ENCODE measurements at regions of chr15 and their contacts with region 1.

Region 1: GRCh38 chr15:66386204-66387123 is at the start of gene MAP2K1:
- DNase-seq: peak; percentile 92
- ATAC-seq: peak; percentile 92
- H3K4me3 ChIP-seq: peak within 1 kb of the TSS; percentile 86 to 94 (median 93)
- H3K27ac ChIP-seq: peak within 1 kb of the TSS; percentile 67
- H3K4me1 ChIP-seq: peaks cover 50% of the 10 kb centered on the region
- H3K27me3 ChIP-seq: no peaks in the 10 kb centered on the region; a peak in 1 of 5 replicates
- CTCF ChIP-seq: peak; percentile 98
- EP300 ChIP-seq: no peak
- POLR2A ChIP-seq: peak; percentile 67 to 86
- RAD21 ChIP-seq: peak; percentile 51; the same call in 1 of the 2 replicates
- total RNA-seq, gene MAP2K1: 24.1 and 29.5 TPM in 2 replicates

Region 2: GRCh38 chr15:66293419-66294156 is 92.9 kb before region 1 on chr15 and contains the start of gene DIS3L:
- CTCF ChIA-PET with region 1: no interaction called
- POLR2A ChIA-PET with region 1: interaction called, 3 read pairs
- in situ Hi-C with region 1: no loop called
- intact Hi-C with region 1: loop called (anchors 10 kb)
- DNase-seq: peak; percentile 32
- ATAC-seq: peak; percentile 87
- H3K4me3 ChIP-seq: peak within 1 kb of the TSS; percentile 69 to 86 (median 82)
- H3K27ac ChIP-seq: peak within 1 kb of the TSS; percentile 91
- H3K4me1 ChIP-seq: peaks cover 41% of the 10 kb centered on the region
- H3K27me3 ChIP-seq: no peaks in the 10 kb centered on the region; a peak in 1 of 5 replicates
- CTCF ChIP-seq: no peak
- EP300 ChIP-seq: no peak
- POLR2A ChIP-seq: peak; percentile 54 to 85
- RAD21 ChIP-seq: peak; percentile 25; the same call in 1 of the 2 replicates
- total RNA-seq, gene DIS3L: 50.5 and 65.4 TPM in 2 replicates

Region 3: DNA sequence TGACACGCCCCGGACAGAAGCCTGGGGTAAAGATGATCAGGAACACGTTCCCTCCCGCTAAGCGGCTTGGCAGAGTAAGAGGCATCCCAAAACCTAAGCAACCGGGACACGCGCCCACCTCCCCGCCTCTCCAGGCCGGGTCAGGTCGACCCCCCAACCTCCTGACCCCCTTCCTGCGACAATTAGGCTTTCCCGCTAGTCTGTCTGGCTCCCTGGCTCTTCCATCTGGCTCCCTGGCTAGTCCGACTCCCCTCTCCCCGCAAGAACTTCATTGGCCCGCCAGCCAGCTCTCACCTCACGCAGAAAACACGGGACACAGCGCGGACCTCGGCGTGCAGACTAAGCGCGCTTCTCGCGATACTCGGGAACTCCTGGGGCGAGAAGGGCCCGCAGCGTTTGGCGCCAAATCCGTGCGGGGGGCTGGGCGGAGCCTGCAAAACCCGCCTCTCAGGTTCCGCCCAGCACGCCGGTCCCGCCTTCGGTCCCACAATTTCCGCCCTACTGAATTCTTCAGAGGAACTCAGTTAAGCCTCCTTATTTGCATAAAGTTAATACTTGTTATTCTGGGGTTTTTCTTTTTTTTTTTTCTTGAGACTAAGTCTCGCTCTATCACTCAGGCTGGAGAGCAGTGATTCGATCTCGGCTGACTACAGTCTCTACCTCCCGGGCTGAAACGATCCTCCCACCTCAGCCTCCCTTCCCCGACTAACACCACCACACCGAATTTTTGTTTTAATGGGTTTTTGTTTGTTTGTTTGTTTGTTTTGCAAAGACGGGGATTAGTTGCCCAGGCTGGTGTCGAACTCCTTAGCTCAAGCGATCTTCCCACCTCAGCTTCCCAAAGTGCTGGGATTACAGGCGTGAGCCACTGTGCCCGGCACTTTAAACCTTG is 29.9 kb before region 1 on chr15 and contains the start of gene TIPIN:
- CTCF ChIA-PET with region 1: no interaction called
- POLR2A ChIA-PET with region 1: interaction called, 11 read pairs
- in situ Hi-C with region 1: no loop called
- intact Hi-C with region 1: loop called (anchors 2 kb)
- DNase-seq: peak; percentile 90
- ATAC-seq: peak; percentile 97
- H3K4me3 ChIP-seq: peak within 1 kb of the TSS; percentile 90 to 91 (median 90)
- H3K27ac ChIP-seq: peak within 1 kb of the TSS; percentile 81
- H3K4me1 ChIP-seq: peaks cover 39% of the 10 kb centered on the region
- H3K27me3 ChIP-seq: no peaks in the 10 kb centered on the region; a peak in 2 of 5 replicates
- CTCF ChIP-seq: no peak
- EP300 ChIP-seq: no peak
- POLR2A ChIP-seq: peak; percentile 84 to 91
- RAD21 ChIP-seq: no peak
- total RNA-seq, gene TIPIN: 28.6 and 37.9 TPM in 2 replicates

Region 4: DNA sequence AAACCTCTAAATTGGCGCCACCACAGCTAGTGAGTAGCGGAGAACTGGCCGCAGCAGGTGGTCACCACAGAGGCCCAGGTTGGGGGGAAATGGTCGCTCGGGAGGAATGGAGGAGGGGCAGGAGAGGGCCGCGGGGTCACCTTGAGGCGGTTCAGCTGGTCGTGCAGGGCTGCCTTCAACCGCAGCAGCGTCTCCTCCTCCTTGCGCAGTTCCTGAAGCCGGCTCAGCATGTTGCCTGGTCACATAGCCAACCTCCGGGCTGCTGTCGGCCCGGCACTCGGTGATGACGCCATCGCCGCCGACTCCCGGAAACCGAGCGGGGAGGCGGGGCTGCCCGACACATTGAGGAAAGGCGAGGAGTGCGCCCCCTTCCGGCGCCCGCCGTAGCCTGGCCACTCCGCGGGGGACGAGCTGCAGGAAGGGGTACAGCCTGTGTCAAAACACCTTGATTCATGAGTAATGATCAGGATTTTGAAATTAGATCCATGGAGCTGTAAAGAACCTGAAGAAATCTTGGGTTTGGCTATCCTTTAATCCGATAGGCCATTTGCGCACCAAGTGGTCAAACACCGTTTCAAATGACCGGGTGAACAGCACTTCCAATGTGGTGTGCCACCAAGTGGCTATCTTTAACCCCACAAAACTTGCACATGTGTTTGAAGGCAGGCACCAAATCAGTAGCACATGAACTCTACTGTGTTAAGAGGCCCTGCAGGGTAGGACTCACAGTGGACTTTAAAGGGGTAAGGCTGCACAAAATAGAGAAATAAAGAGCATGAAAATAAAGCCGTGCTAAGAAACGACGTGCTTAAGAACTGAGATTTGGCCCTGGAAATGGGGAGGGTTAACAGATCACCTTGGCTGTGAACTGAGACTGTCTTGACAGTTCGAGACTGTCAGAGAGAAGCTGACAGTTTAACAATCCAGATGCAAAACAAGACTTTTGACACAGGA is 111.3 kb after region 1 on chr15 and contains the start of gene SNAPC5:
- CTCF ChIA-PET with region 1: interaction called, 17 read pairs
- POLR2A ChIA-PET with region 1: interaction called, 38 read pairs
- in situ Hi-C with region 1: loop called (anchors 25 kb)
- intact Hi-C with region 1: loop called (anchors 1 kb)
- DNase-seq: peak; percentile 88
- ATAC-seq: peak; percentile 80
- H3K4me3 ChIP-seq: peak within 1 kb of the TSS; percentile 80 to 93 (median 86)
- H3K27ac ChIP-seq: peak within 1 kb of the TSS; percentile 80
- H3K4me1 ChIP-seq: peaks cover 56% of the 10 kb centered on the region
- H3K27me3 ChIP-seq: no peaks in the 10 kb centered on the region
- CTCF ChIP-seq: peak; percentile 97
- EP300 ChIP-seq: no peak
- POLR2A ChIP-seq: peak; percentile 71 to 81
- RAD21 ChIP-seq: peak; percentile 78
- total RNA-seq, gene SNAPC5: 36.2 and 49.3 TPM in 2 replicates

Region 5: GRCh38 chr15:66504563-66505429 is 118.3 kb after region 1 on chr15 and contains the starts of genes RPL4 and ZWILCH:
- CTCF ChIA-PET with region 1: no interaction called
- POLR2A ChIA-PET with region 1: interaction called, 13 read pairs
- in situ Hi-C with region 1: loop called (anchors 25 kb)
- intact Hi-C with region 1: no loop called
- DNase-seq: peak; percentile 97
- ATAC-seq: peak; percentile 90
- H3K4me3 ChIP-seq: peak within 1 kb of the TSS; percentile 69 to 100 (median 88)
- H3K27ac ChIP-seq: peak within 1 kb of the TSS; percentile 89
- H3K4me1 ChIP-seq: peaks cover 50% of the 10 kb centered on the region
- H3K27me3 ChIP-seq: peaks cover 0 to 5% of the 10 kb centered on the region in 2 experiments; a peak in 1 of 5 replicates
- CTCF ChIP-seq: no peak
- EP300 ChIP-seq: peak in 1 of 2 experiments; percentile 14; a peak in 1 of 4 replicates
- POLR2A ChIP-seq: peak; percentile 94 to 96
- RAD21 ChIP-seq: no peak
- total RNA-seq, gene RPL4: 3,630 and 4,972 TPM in 2 replicates
- total RNA-seq, gene ZWILCH: 27.8 and 44.6 TPM in 2 replicates

Measured in HepG2 (cell line).